ENCODE measurements at regions of chr16 and their contacts with region 1.

Region 1: DNA sequence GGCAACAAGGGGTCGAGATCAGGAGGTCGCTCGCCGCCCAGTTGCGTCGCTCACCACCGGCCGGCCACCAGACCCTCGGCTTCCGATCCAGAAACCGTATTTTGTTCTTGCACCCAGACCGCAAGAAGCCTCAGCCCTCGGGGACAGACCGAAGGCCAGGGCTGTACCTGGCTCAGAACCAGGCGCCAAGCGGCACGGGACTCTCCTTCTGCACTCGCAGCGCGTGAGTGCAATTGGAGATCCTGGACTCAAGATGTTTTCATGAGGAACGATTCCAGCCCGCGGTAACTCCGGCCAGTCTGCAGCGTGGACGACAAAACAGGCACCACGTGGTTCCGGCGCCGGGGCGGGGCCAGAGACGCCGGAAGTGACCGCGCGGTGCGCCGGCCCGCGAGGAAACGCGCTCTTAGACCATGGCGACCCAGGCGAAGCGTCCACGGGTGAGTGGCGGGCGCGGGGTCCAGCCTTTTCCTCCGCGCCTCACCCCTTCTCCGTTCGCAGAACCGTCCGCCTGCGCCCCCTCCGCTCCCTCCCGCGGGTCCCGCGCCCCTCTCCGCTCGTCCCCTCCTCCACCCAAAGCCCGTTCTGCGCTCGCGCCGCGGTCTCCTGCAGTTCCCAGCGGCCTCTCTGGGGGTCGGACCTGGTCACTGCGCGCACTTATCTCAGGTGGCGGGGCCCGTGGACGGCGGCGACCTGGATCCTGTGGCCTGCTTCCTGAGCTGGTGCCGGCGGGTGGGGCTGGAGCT is at the start of gene SETD6:
- DNase-seq: peak; percentile 91
- ATAC-seq: peak; percentile 94 to 95
- total RNA-seq, gene SETD6: 10.7 to 10.8 TPM

Region 2: DNA sequence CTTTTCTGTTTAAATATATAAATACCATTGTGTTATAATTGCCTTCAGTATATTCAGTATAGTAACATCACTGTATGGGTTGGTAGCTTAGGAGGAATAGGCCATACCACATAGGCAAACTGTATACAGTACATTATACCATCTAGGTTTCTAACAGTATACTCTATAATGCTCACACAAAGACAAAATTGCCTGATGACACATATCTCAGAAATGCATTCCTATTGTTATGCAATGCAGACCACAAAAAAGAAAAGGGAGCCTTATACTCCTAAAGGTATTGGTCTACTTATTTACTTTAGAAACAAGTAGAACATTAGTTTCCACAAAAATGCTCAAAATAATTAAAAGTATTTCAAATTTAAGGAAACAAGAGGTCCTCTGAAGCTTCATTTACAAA is 47.9 kb after region 1 on chr16:
- intact Hi-C with region 1: loop called in 1 of 2 experiments (anchors 5 kb)
- DNase-seq: no peak
- ATAC-seq: no peak

Region 3: GRCh38 chr16:58582971-58583765 is 67.9 kb after region 1 on chr16:
- intact Hi-C with region 1: loop called in 1 of 2 experiments (anchors 10 kb)
- DNase-seq: peak; percentile 27
- ATAC-seq: no peak

Region 4: DNA sequence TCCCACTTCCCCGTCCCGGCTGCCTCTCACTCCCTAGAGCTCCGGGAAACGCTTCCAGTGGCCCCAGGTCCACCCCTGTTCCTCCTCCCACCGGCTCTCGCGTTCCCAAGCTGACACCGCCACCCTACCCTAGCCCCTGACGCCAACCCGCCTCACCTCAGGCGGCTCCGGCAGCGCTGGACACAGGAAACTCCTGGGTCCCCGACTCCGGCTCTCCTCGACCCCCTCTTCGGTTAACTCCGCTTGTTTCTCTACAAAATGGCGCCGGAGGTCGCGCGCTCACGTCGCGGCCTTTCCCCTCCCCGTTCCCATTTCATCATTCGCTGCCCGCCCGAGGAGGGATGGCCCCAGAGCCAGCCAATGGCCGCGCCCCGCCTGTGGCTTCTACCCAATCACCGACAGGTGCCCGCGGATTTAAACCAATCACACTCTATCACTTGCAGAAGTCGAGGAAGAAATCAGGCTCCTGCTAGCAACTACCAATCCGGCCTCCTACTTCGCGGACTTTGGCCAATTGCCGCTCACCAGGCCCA is 114.3 kb after region 1 on chr16 and contains the start of gene CNOT1:
- intact Hi-C with region 1: loop called in 1 of 2 experiments (anchors 10 kb)
- DNase-seq: peak; percentile 97
- ATAC-seq: peak; percentile 95 to 96
- total RNA-seq, gene CNOT1: 74.2 to 92.9 TPM

Region 5: DNA sequence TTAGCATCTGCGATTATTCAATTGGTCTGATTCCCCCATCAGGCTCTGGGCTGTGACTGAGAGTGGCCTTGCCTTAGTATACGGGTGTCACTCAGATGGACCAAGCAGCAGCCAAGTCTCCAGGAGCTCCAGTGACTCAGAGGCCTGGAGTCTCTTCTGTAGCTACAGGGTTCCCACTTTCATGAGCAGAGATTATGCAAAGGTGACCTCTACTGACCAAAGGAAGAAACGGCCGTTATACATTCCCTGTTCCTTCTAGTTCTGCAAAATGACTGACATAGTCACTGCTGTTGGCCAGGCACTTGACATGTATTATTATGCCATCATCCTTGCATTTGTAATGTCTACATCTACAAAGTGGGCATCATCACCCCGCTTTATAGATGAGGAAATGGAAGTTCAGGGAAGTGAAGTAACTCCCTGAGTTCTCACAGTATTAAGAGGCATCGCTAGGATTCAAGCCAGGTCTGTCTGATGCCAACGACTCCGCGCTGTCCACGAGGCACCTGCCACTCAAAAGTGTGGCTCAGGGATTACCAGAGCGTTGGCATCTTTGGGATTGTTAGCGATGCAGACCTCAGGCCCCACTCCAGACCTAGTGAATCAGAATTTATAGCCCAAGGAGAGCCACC is 146.0 kb after region 1 on chr16:
- intact Hi-C with region 1: loop called in 1 of 2 experiments (anchors 5 kb)
- DNase-seq: peak; percentile 62
- ATAC-seq: peak; percentile 89 to 97